ENCODE measurements at regions of chr11 and their contacts with region 1.

Region 1: GRCh38 chr11:119067371-119068222 is at the start of gene VPS11:
- DNase-seq: peak; percentile 93 to 99 (median 98)
- ATAC-seq: peak; percentile 91
- H3K4me3 ChIP-seq: peak within 1 kb of the TSS; percentile 99
- H3K4me3 Mint-ChIP-seq: peak within 1 kb of the TSS; percentile 91
- H3K27ac ChIP-seq: peak within 1 kb of the TSS; percentile 84 to 95
- H3K27ac Mint-ChIP-seq: peak within 1 kb of the TSS; percentile 90
- H3K4me1 ChIP-seq: peaks cover 43% of the 10 kb centered on the region
- H3K4me1 Mint-ChIP-seq: peaks cover 45% of the 10 kb centered on the region
- H3K27me3 ChIP-seq: no peaks in the 10 kb centered on the region
- H3K27me3 Mint-ChIP-seq: no peaks in the 10 kb centered on the region
- CTCF ChIP-seq: no peak
- total RNA-seq, gene VPS11: 76.4 to 84.3 TPM

Region 2: DNA sequence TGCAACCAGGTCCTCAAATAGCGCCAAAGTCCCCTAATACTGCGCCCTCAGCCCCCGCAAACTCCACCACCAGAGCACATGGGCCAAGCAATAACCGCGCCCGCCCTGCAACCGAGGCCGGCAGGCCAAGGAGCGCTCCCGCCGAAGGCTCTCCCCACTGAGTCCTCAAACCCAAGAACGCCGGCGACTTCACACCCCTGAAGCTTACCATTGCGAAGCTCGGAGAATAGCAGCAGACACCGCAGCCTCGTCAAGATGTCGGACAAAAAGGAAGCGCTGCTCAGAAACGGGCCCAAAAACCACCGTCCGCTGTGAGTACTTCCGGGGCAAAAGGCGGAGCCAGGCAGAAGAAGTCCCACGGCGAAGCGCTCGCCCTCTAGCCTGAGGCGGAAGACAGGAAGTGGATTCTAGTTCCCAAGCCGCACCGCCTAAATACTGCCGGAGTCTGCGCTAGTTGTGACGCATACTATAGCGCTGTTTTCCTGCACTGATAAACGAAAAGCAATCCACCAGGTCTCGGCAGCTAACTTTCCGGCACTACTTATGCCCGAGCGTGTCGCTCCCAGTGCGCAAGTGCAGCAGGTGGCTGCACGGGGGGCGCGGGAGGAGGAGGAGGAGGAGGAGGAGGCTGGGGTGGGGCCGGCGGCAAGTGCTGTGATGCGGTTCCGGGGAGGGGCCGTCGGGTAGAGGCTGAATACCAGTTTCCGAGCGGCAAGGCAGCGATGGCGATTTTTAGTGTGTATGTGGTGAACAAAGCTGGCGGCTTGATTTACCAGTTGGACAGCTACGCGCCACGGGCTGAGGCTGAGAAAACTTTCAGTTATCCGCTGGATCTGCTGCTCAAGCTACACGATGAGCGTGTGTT is 49.3 kb before region 1 on chr11 and contains the starts of genes RPS25 and TRAPPC4:
- CTCF ChIA-PET with region 1: interaction called, 3 read pairs
- POLR2A ChIA-PET with region 1: interaction called, 38 read pairs
- intact Hi-C with region 1: loop called (anchors 2 kb)
- DNase-seq: peak; percentile 92 to 99 (median 94)
- ATAC-seq: peak; percentile 83
- H3K4me3 ChIP-seq: peak within 1 kb of the TSS; percentile 63
- H3K4me3 Mint-ChIP-seq: peak within 1 kb of the TSS; percentile 100
- H3K27ac ChIP-seq: peak within 1 kb of the TSS; percentile 93
- H3K27ac Mint-ChIP-seq: peak within 1 kb of the TSS; percentile 99
- H3K4me1 ChIP-seq: peaks cover 58% of the 10 kb centered on the region
- H3K4me1 Mint-ChIP-seq: peaks cover 62% of the 10 kb centered on the region
- H3K27me3 ChIP-seq: no peaks in the 10 kb centered on the region
- H3K27me3 Mint-ChIP-seq: no peaks in the 10 kb centered on the region
- CTCF ChIP-seq: no peak
- total RNA-seq, gene RPS25: 2,261 to 2,296 TPM
- total RNA-seq, gene TRAPPC4: 101 to 106 TPM

Region 3: GRCh38 chr11:119084663-119085436 is 17.3 kb after region 1 on chr11 and contains the start of gene HMBS:
- CTCF ChIA-PET with region 1: interaction called, 7 read pairs
- POLR2A ChIA-PET with region 1: interaction called, 55 read pairs
- intact Hi-C with region 1: loop called (anchors 1 kb)
- DNase-seq: peak; percentile 70 to 96 (median 88)
- ATAC-seq: peak; percentile 94
- H3K4me3 ChIP-seq: peak within 1 kb of the TSS; percentile 79
- H3K4me3 Mint-ChIP-seq: peak within 1 kb of the TSS; percentile 92
- H3K27ac ChIP-seq: peak within 1 kb of the TSS; percentile 74 to 81
- H3K27ac Mint-ChIP-seq: peak within 1 kb of the TSS; percentile 88
- H3K4me1 ChIP-seq: peaks cover 26% of the 10 kb centered on the region
- H3K4me1 Mint-ChIP-seq: peaks cover 25% of the 10 kb centered on the region
- H3K27me3 ChIP-seq: no peaks in the 10 kb centered on the region
- H3K27me3 Mint-ChIP-seq: no peaks in the 10 kb centered on the region
- CTCF ChIP-seq: no peak
- total RNA-seq, gene HMBS: 3.4 to 4.1 TPM

Region 4: GRCh38 chr11:119101759-119102423 is 34.3 kb after region 1 on chr11 and contains the start of gene DPAGT1:
- CTCF ChIA-PET with region 1: interaction called, 3 read pairs
- POLR2A ChIA-PET with region 1: interaction called, 38 read pairs
- intact Hi-C with region 1: loop called (anchors 1 to 5 kb)
- DNase-seq: peak; percentile 73 to 92 (median 78)
- ATAC-seq: peak; percentile 84
- H3K4me3 ChIP-seq: peak within 1 kb of the TSS; percentile 90
- H3K4me3 Mint-ChIP-seq: peak within 1 kb of the TSS; percentile 95
- H3K27ac ChIP-seq: peak within 1 kb of the TSS; percentile 83 to 95
- H3K27ac Mint-ChIP-seq: peak within 1 kb of the TSS; percentile 97
- H3K4me1 ChIP-seq: peaks cover 35% of the 10 kb centered on the region
- H3K4me1 Mint-ChIP-seq: peaks cover 51% of the 10 kb centered on the region
- H3K27me3 ChIP-seq: no peaks in the 10 kb centered on the region
- H3K27me3 Mint-ChIP-seq: no peaks in the 10 kb centered on the region
- CTCF ChIP-seq: no peak
- total RNA-seq, gene DPAGT1: 9.5 to 11.7 TPM

Region 5: GRCh38 chr11:119121008-119121810 is 53.6 kb after region 1 on chr11 and contains the start of gene HINFP:
- CTCF ChIA-PET with region 1: no interaction called
- POLR2A ChIA-PET with region 1: interaction called, 17 read pairs
- intact Hi-C with region 1: loop called (anchors 1 to 5 kb)
- DNase-seq: peak; percentile 99 to 100 (median 100)
- ATAC-seq: peak; percentile 96
- H3K4me3 ChIP-seq: peak within 1 kb of the TSS; percentile 92
- H3K4me3 Mint-ChIP-seq: peak within 1 kb of the TSS; percentile 91
- H3K27ac ChIP-seq: peak within 1 kb of the TSS; percentile 75 to 76
- H3K27ac Mint-ChIP-seq: peak within 1 kb of the TSS; percentile 85
- H3K4me1 ChIP-seq: peaks cover 29% of the 10 kb centered on the region
- H3K4me1 Mint-ChIP-seq: peaks cover 47% of the 10 kb centered on the region
- H3K27me3 ChIP-seq: no peaks in the 10 kb centered on the region
- H3K27me3 Mint-ChIP-seq: no peaks in the 10 kb centered on the region
- CTCF ChIP-seq: no peak
- total RNA-seq, gene HINFP: 17.6 to 20.5 TPM

Region 6: GRCh38 chr11:119205574-119206510 is 138.2 kb after region 1 on chr11 and contains the start of gene CBL:
- CTCF ChIA-PET with region 1: no interaction called
- POLR2A ChIA-PET with region 1: interaction called, 14 read pairs
- intact Hi-C with region 1: no loop called
- DNase-seq: peak; percentile 94 to 99 (median 96)
- ATAC-seq: peak; percentile 88
- H3K4me3 ChIP-seq: peak within 1 kb of the TSS; percentile 95
- H3K4me3 Mint-ChIP-seq: peak within 1 kb of the TSS; percentile 96
- H3K27ac ChIP-seq: peak within 1 kb of the TSS; percentile 76 to 90
- H3K27ac Mint-ChIP-seq: peak within 1 kb of the TSS; percentile 88
- H3K4me1 ChIP-seq: peaks cover 31% of the 10 kb centered on the region
- H3K4me1 Mint-ChIP-seq: peaks cover 43% of the 10 kb centered on the region
- H3K27me3 ChIP-seq: no peaks in the 10 kb centered on the region
- H3K27me3 Mint-ChIP-seq: no peaks in the 10 kb centered on the region
- CTCF ChIP-seq: peak; percentile 80
- total RNA-seq, gene CBL: 19.5 to 20.8 TPM

Region 7: DNA sequence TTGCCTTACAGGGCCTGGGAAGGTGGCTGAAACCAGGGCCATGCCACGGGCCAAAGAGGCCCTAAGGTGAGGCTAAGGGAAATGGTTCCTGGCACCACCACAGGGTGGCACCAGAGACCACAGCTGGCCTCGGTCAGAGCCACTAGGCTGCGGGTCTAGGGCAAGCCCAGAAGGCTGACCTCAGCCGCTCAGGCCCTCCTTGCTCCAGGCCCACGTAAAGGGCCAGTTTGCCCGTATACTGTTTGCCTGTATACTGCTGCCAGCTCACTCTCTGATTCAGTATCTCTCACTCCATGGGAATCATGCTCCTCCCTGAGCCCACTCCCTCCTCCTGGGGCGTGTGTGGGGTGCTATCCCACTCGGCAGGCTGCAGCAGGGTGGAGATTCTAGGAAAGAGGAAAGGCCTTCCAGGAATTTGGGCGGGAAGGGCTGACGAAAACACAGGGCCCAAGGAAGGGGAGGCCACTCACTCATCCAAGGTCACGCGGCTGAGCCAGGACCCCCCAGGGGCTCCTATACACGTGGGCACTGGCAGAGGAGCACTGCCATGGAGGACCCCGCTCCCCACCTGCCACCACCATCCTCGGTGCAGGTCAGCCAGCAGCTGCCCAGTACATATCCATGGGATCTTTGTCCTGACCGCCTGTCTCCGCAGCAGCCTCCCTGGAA is 599.0 kb after region 1 on chr11:
- CTCF ChIA-PET with region 1: no interaction called
- POLR2A ChIA-PET with region 1: no interaction called
- intact Hi-C with region 1: no loop called
- DNase-seq: peak; percentile 32 to 74 (median 47)
- ATAC-seq: peak; percentile 66
- H3K4me3 ChIP-seq: no peak overlapping the region
- H3K4me3 Mint-ChIP-seq: no peak overlapping the region
- H3K27ac ChIP-seq: no peak overlapping the region
- H3K27ac Mint-ChIP-seq: no peak overlapping the region
- H3K4me1 ChIP-seq: no peaks in the 10 kb centered on the region
- H3K4me1 Mint-ChIP-seq: no peaks in the 10 kb centered on the region
- H3K27me3 ChIP-seq: no peaks in the 10 kb centered on the region
- H3K27me3 Mint-ChIP-seq: no peaks in the 10 kb centered on the region
- CTCF ChIP-seq: peak; percentile 69

Measured in CD4-positive, alpha-beta T cell (primary cell).